WTC11 (cell line): ENCODE measurements at regions of chr20 and their contacts with region 1.

Region 1: DNA sequence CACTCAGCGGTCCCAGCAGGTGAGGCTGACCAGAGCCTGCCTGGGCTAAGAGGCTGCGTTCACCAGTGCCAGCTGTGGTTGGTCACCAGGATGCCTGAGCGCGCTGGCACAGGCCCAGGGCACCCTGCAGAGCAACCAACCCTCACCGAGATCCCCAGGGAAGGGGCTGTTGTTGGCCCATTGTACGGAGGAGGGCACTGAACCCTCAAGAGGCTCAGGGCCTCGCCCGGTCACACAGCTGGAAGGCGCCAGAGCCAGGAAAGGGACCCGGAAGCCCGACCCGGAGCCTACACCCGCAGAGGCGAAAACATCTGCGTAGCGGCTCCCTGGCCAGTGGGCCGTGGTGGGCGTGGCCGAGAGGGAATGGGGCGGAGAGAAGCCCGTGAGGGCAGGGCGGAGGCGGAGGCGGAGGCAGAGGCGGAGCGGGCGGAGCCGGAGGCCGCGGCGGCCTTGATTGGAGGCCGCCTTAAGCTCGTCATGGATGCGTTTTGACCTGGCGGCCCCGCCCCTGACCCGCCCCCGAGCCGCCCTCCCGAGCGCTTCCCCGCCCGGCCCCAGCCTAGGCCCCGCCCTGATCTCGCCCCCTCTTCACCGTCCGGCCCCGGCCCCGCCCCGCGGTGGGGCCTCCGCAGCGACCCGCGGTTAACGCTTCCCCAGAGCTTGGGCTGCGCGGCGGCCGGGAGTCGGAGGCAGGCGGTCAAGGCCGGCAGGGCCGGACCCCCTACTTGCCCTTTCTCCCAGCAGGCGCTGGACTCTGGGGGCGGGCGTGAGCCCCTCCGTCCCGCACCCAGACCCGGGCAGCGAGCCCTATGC is 2.2 kb upstream of the MRGBP start:
- DNase-seq: peak; percentile 98
- ATAC-seq: peak; percentile 83
- H3K4me3 Mint-ChIP-seq: peak overlapping the region; percentile 79
- H3K27ac Mint-ChIP-seq: no peak overlapping the region
- H3K4me1 Mint-ChIP-seq: peaks cover 16% of the 10 kb centered on the region
- H3K27me3 Mint-ChIP-seq: peaks cover 19% of the 10 kb centered on the region
- CTCF ChIP-seq: no peak

Region 2: DNA sequence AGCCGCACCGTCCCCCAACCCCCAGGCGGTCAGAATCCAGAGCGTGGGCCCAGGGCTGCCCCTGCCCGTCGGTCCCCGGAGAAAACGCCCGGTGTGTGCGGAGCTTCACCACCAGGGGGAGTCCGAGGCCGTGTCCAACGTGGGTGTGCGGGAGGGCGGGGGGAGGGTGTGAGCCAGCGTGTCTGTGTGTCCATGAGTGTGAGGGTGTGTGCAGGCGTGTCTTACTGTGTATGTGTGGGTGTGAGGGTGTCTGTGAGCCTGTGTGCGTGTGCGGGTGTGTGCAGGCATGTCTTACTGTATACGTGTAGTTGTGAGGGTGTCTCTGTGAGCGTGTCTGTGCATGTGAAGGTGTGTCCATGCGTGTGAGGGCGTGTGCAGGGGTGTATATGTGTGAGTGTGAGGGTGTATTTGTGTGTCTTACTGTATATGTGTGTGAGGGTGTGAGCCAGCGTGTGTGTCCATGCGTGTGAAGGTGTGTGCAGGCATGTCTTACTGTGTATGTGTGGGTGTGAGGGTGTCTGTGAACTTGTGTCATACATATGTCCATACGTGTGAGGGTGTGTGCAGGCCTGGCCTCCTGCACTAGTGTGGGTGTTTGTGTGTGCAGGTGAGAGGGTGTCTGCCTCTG is 293.8 kb before region 1 on chr20:
- CTCF ChIA-PET with region 1: interaction called, 10 read pairs
- POLR2A ChIA-PET with region 1: no interaction called
- DNase-seq: peak; percentile 88
- ATAC-seq: peak; percentile 64
- H3K4me3 Mint-ChIP-seq: no peak overlapping the region
- H3K27ac Mint-ChIP-seq: peak overlapping the region; percentile 0; the same call in 1 of the 2 replicates
- H3K4me1 Mint-ChIP-seq: peaks cover 3% of the 10 kb centered on the region
- H3K27me3 Mint-ChIP-seq: peaks cover 5% of the 10 kb centered on the region; the same call in 1 of the 2 replicates
- CTCF ChIP-seq: peak; percentile 82

Region 3: DNA sequence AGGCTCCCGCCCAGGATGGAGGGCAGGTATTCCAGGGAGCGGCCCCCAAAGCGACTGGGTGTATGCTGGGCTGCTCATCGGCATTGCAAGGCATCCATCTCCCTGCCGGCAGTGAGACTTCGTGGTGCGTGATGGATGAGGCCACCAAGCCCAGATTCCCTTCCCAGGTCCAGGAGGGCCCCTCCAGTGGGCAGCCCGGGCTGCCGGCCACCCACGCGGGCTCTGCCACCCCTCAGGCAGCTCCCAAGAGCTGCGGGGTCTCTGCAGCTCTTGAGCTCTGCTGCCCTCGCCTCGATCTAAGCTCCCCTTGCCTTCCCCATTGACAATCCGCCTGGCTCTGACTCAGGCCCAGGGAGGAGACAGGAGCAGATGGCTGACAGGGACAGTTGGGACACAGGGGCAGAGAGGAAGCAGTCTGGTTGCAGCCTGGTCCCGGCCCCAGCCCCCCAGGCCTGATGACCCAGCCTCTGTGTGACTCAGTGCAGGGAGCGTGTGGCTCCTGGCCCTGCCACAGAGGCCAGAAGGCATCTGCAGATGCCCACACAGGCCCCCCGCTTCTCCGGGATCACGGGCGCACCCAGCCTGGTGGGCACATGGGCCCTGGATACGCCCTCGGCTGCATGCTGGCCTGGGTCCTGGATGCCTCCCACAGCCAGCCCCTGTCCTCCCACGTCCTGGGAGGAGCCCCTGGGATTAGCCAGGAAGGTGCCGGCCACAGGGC is 118.8 kb before region 1 on chr20:
- CTCF ChIA-PET with region 1: interaction called, 26 read pairs
- POLR2A ChIA-PET with region 1: no interaction called
- DNase-seq: no peak
- ATAC-seq: no peak
- H3K4me3 Mint-ChIP-seq: no peak overlapping the region
- H3K27ac Mint-ChIP-seq: no peak overlapping the region
- H3K4me1 Mint-ChIP-seq: no peaks in the 10 kb centered on the region
- H3K27me3 Mint-ChIP-seq: no peaks in the 10 kb centered on the region
- CTCF ChIP-seq: no peak

Region 4: GRCh38 chr20:62723351-62723750 is 70.8 kb before region 1 on chr20:
- CTCF ChIA-PET with region 1: interaction called, 10 read pairs
- POLR2A ChIA-PET with region 1: no interaction called
- DNase-seq: no peak
- ATAC-seq: no peak
- H3K4me3 Mint-ChIP-seq: no peak overlapping the region
- H3K27ac Mint-ChIP-seq: no peak overlapping the region
- H3K4me1 Mint-ChIP-seq: no peaks in the 10 kb centered on the region
- H3K27me3 Mint-ChIP-seq: peaks cover 12% of the 10 kb centered on the region
- CTCF ChIP-seq: no peak

Region 5: DNA sequence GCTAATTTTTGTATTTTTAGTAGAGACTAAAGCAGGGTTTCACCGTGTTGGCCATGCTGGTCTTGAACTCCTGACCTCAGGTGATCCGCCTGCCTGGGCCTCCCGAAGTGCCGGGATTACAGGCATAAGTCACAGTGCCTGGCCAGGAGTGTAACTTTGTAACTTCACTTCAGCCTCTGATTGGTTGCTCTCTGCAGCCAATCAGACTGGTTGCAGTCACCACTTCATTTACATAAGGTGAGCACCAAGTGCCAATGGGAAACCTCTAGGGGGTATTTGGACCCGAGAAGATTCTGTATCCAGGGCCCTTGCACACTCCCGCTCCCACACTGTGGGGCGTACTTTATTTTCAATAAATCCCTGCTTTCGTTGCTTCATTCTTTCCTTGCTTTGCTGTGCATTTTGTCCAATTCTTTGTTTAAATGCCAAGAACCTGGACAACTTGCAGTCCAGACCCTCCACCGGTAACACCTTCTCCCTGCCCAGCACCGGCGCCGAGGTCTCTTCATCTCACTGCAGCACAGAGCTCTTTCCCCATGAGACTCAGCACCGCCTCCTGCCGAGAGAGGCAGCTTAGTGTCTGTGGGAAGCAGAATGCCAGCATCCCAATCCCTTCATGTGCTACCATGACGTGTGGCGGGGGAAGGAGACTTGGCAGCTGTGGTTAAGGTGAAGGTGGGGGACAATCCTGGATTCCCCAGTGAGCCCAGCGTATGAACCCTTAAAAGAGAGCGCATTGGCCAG is 11.8 kb before region 1 on chr20:
- CTCF ChIA-PET with region 1: interaction called, 28 read pairs
- POLR2A ChIA-PET with region 1: no interaction called
- DNase-seq: peak; percentile 55
- ATAC-seq: peak; percentile 37
- H3K4me3 Mint-ChIP-seq: no peak overlapping the region
- H3K27ac Mint-ChIP-seq: no peak overlapping the region; the same call in 1 of the 2 replicates
- H3K4me1 Mint-ChIP-seq: peaks cover 4% of the 10 kb centered on the region
- H3K27me3 Mint-ChIP-seq: no peaks in the 10 kb centered on the region
- CTCF ChIP-seq: no peak

Region 6: DNA sequence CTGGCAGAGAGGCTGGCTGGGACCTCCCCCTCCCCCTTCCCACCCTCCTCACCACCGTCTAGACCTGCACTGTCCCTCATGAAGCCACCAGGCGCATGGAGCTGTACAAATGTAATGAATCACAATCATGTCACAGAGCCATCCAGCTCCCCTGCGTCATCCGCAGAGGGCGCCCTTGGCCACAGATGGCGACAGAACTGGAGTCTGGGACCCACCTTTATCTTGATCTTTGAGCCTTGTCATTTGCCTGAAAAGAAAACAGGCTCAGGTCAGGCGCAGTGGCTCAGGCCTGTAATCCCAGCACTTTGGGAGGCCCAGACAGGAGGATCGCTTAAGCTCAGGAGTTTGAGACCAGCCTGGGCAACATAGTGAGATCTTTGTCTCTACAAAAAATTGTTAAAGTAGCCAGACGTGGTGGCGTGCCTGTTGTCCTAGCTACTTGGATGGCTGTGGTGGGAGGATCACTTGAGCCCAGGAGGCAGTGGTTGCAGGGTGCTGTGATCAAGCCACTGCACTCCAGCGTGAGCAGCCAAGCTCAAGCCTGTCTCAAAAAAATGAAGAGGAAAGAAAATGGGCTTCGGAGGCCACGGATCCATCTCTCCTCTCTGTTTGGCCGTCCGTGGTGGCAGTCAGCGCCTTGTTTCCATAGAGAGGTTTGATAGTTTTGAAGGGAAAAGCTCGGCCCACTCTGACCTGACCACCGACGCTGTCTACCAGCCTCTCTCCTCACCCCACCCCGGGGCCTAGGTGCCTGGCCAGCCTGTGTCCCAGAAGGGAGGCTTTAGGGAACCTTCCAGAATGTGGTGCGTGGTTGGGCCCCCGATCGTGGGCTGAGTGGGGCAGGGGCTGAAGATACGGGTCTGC is 28.9 kb after region 1 on chr20:
- CTCF ChIA-PET with region 1: interaction called, 10 read pairs
- POLR2A ChIA-PET with region 1: interaction called, 4 read pairs
- DNase-seq: peak; percentile 71
- ATAC-seq: peak; percentile 29
- H3K4me3 Mint-ChIP-seq: no peak overlapping the region
- H3K27ac Mint-ChIP-seq: peak overlapping the region; percentile 84
- H3K4me1 Mint-ChIP-seq: peaks cover 16% of the 10 kb centered on the region
- H3K27me3 Mint-ChIP-seq: no peaks in the 10 kb centered on the region
- CTCF ChIP-seq: peak; percentile 27; the same call in 1 of the 2 replicates